ENCODE measurements at regions of chr17 and their contacts with region 1.

Region 1: GRCh38 chr17:13031718-13032350 is 14.0 kb upstream of the ELAC2 start:
- DNase-seq: peak; percentile 57
- H3K4me3 Mint-ChIP-seq: no peak overlapping the region
- H3K27ac Mint-ChIP-seq: no peak overlapping the region
- H3K4me1 Mint-ChIP-seq: peaks cover 5% of the 10 kb centered on the region
- H3K27me3 Mint-ChIP-seq: peaks cover 37% of the 10 kb centered on the region
- CTCF ChIP-seq: peak; percentile 65

Region 2: GRCh38 chr17:13017659-13018459 is 14.0 kb before region 1 on chr17 and contains the start of gene ELAC2:
- CTCF ChIA-PET with region 1: interaction called, 100 read pairs
- POLR2A ChIA-PET with region 1: interaction called, 23 read pairs
- intact Hi-C with region 1: no loop called
- DNase-seq: peak; percentile 99
- H3K4me3 Mint-ChIP-seq: peak within 1 kb of the TSS; percentile 89
- H3K27ac Mint-ChIP-seq: peak within 1 kb of the TSS; percentile 91
- H3K4me1 Mint-ChIP-seq: peaks cover 6% of the 10 kb centered on the region
- H3K27me3 Mint-ChIP-seq: no peaks in the 10 kb centered on the region
- CTCF ChIP-seq: peak; percentile 13
- total RNA-seq, gene ELAC2: 67.1 and 67.4 TPM in 2 replicates

Region 3: GRCh38 chr17:13051915-13052314 is 20.1 kb after region 1 on chr17:
- CTCF ChIA-PET with region 1: interaction called, 61 read pairs
- POLR2A ChIA-PET with region 1: no interaction called
- intact Hi-C with region 1: no loop called
- DNase-seq: no peak
- H3K4me3 Mint-ChIP-seq: no peak overlapping the region
- H3K27ac Mint-ChIP-seq: no peak overlapping the region
- H3K4me1 Mint-ChIP-seq: no peaks in the 10 kb centered on the region
- H3K27me3 Mint-ChIP-seq: peaks cover 64% of the 10 kb centered on the region
- CTCF ChIP-seq: no peak

Region 4: DNA sequence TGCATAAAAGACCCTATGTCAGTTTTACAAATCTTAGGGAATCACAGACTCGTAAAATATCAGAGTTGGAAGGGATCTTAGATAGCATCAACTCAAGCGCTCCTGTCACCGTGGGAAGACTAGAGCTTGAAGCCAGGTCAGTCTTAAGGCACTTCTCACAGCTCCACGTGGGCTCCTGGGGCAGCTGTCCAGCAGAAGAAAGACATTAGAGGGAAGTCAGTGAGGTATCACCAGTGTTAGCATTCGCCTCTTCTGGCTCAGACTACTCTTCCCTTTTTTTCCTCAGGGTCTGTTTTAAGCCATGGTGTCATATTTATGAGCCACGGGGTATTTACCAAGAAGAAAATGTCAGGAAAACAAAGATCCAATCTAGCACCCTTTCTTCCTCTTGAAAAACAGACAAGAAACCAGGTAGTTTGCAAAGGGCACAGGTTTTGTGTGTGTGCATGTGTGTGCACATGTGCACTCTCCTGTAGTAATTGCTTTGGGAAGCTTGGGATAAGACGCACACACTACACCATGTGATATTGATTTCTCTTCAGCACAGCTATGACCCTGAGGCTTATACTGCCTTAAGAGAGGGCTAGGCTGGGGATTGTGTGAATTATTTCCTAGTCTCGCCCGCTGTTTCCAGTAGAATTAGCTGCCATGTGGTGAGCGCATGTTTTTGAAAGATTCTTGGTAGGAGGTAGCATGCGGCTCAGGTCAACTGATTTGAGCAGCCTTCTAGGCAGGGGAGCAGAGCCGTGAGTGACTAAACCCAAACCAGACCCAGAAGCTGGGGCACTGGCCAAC is 47.0 kb after region 1 on chr17:
- CTCF ChIA-PET with region 1: interaction called, 10 read pairs
- POLR2A ChIA-PET with region 1: no interaction called
- intact Hi-C with region 1: no loop called
- DNase-seq: no peak
- H3K4me3 Mint-ChIP-seq: no peak overlapping the region
- H3K27ac Mint-ChIP-seq: no peak overlapping the region
- H3K4me1 Mint-ChIP-seq: peaks cover 4% of the 10 kb centered on the region
- H3K27me3 Mint-ChIP-seq: peaks cover 16% of the 10 kb centered on the region
- CTCF ChIP-seq: no peak

Region 5: GRCh38 chr17:13337864-13338371 is 306.1 kb after region 1 on chr17:
- CTCF ChIA-PET with region 1: interaction called, 6 read pairs
- POLR2A ChIA-PET with region 1: interaction called, 3 read pairs
- intact Hi-C with region 1: loop called (anchors 10 kb)
- DNase-seq: peak; percentile 77
- H3K4me3 Mint-ChIP-seq: peak overlapping the region; percentile 66
- H3K27ac Mint-ChIP-seq: peak overlapping the region; percentile 23
- H3K4me1 Mint-ChIP-seq: no peaks in the 10 kb centered on the region
- H3K27me3 Mint-ChIP-seq: no peaks in the 10 kb centered on the region
- CTCF ChIP-seq: peak; percentile 79